Activated naive CD4-positive, alpha-beta T cell treated with anti-CD3 and anti-CD28 coated beads for 36 hours (primary cell): ENCODE measurements at regions of chr20 and their contacts with region 1.

Region 1: GRCh38 chr20:2470423-2471193 is at the start of gene SNRPB:
- DNase-seq: peak; percentile 98
- H3K4me3 Mint-ChIP-seq: peak within 1 kb of the TSS; percentile 99
- H3K27ac Mint-ChIP-seq: peak within 1 kb of the TSS; percentile 100
- H3K4me1 Mint-ChIP-seq: peaks cover 52% of the 10 kb centered on the region
- H3K27me3 Mint-ChIP-seq: no peaks in the 10 kb centered on the region
- total RNA-seq, gene SNRPB: 422 to 431 TPM

Region 2: GRCh38 chr20:2217857-2218539 is 252.6 kb before region 1 on chr20:
- CTCF ChIA-PET with region 1: no interaction called
- intact Hi-C with region 1: loop called (anchors 5 kb)
- DNase-seq: peak; percentile 73
- H3K4me3 Mint-ChIP-seq: no peak overlapping the region
- H3K27ac Mint-ChIP-seq: peak overlapping the region; percentile 42
- H3K4me1 Mint-ChIP-seq: peaks cover 22% of the 10 kb centered on the region
- H3K27me3 Mint-ChIP-seq: no peaks in the 10 kb centered on the region

Region 3: DNA sequence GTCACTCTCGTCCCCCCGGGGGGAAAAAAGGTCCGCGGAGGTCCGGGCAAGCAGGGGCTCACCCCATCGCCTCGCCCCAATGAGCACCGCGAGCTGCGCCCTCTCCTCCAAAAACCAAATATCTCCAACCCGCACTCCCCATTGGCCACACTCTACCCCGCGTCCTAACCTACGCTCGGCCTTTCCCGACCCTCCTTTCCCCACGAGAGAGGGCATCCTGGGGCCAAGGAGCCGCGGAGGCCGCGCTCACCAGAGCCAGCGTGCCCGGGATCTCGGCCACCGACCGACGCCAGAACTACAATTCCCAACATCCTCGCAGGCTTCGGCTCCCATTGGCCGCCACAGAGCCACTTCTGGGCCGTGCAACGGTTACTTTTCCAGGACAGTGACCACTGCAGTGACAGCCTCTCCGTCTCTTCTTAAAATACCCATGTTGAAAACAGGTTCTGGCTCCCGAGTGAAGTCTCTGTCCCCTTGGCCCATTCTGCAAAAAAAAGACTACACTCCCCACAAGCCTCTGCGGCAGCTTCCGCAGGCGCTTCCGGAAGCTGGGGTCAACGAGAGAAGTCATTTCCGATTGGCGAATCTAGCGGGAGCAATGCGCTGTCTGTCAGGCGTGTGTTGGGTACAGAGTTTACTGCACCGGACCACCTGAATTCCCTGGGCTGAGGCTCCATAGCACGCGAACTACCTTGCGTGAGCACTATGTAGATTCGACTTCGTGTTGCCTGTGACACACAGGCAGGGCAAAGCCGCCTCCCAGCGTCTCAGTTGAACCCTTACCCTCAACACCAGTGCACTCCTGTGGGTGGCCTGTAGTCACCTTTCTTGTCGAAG is 38.2 kb after region 1 on chr20 and contains the start of gene ZNF343:
- CTCF ChIA-PET with region 1: no interaction called
- intact Hi-C with region 1: loop called (anchors 1 kb)
- DNase-seq: peak; percentile 85
- H3K4me3 Mint-ChIP-seq: peak within 1 kb of the TSS; percentile 99
- H3K27ac Mint-ChIP-seq: peak within 1 kb of the TSS; percentile 90
- H3K4me1 Mint-ChIP-seq: peaks cover 21% of the 10 kb centered on the region
- H3K27me3 Mint-ChIP-seq: peaks cover 3% of the 10 kb centered on the region
- total RNA-seq, gene ZNF343: 5.3 to 5.7 TPM

Region 4: GRCh38 chr20:2651772-2652723 is 181.4 kb after region 1 on chr20 and contains the start of gene NOP56:
- CTCF ChIA-PET with region 1: no interaction called
- intact Hi-C with region 1: loop called (anchors 1 kb)
- DNase-seq: peak; percentile 92
- H3K4me3 Mint-ChIP-seq: peak within 1 kb of the TSS; percentile 90
- H3K27ac Mint-ChIP-seq: peak within 1 kb of the TSS; percentile 90
- H3K4me1 Mint-ChIP-seq: peaks cover 48% of the 10 kb centered on the region
- H3K27me3 Mint-ChIP-seq: no peaks in the 10 kb centered on the region
- total RNA-seq, gene NOP56: 385 to 405 TPM